GM18951 (cell line): ENCODE measurements at regions of chr6 and their contacts with region 1.

Region 1: DNA sequence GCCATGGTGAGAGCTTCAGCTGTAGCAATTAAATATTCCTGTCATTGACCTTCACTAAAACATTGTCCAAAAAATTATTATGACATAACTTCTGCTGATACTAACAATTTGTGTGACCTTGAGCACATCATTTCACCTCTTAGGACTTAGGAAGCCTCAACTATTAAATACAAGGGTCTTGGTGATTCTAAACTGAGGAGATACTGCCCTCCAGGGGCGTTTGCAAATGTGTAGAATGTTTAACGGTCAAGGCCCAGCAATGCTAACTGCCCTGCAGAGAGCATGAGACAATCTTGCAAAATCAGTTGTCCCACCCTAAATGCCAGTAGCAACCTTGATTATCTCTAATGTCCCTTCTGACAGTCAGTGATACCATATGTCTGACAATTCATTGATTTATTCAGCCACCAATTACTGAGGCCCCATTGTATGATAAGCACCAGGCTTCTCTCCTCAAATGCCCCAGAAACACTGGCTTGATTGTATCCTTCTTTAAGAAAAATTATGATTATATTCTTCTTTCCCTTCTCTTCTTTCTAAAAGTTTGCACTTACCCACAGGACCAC is 284.1 kb upstream of the PLN start:
- POLR2A ChIP-seq: no peak

Region 2: DNA sequence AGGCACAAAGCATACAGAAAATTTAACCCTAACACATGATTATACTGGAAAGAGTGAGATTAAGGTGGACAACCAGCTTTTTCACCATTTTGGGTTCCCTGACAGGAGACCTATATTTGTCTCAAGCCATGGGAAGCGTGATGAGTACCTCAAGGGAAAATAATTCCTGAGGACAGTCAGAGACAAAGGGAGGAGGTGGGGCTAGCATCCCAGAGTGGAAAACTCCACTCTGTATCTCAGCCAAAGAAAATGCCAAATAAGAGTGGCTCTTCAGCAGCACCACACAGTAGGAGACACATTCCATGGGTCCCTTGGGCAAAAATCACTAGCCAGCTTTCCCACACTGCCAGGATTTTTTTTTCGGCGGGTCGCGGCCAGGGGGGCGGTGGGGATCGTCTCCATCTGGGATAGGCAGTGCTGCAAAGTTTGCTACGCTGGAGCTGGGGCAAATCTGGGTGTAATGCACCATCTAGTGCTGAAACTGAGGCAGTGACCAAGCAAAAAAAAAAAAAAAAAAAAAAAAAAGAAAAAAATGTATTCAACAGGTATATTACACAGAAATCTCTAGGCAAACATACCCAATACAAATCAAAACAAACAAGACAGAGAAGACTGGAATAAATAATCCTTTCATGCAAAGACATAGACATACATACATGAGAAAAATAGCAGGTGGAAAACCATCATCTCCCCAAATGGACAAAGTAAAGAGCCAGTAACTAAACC is 434.2 kb before region 1 on chr6:
- in situ Hi-C with region 1: loop called (anchors 25 kb)
- POLR2A ChIP-seq: no peak

Region 3: DNA sequence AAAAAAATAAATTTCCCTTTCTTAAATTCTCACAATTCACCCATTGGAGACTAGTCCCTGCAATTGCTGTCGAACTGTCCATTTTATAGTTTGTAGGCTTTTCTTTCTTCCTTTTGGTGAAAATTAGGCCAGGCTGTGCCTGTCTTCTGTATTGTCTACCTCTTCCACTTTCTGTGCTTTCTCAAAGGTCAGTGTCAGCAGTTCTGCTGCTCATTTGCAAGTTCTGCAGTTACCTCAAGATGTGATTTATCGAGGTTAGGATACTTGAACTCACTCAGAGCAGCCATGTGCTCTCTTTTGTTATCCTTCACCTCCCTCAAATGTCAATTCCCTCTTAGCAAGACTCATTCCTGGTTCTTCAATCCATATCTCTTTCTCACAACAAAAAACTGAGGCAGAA is 177.8 kb before region 1 on chr6:
- in situ Hi-C with region 1: no loop called
- POLR2A ChIP-seq: no peak

Region 4: GRCh38 chr6:118111708-118112107 is 152.3 kb before region 1 on chr6:
- in situ Hi-C with region 1: no loop called
- POLR2A ChIP-seq: no peak

Region 5: DNA sequence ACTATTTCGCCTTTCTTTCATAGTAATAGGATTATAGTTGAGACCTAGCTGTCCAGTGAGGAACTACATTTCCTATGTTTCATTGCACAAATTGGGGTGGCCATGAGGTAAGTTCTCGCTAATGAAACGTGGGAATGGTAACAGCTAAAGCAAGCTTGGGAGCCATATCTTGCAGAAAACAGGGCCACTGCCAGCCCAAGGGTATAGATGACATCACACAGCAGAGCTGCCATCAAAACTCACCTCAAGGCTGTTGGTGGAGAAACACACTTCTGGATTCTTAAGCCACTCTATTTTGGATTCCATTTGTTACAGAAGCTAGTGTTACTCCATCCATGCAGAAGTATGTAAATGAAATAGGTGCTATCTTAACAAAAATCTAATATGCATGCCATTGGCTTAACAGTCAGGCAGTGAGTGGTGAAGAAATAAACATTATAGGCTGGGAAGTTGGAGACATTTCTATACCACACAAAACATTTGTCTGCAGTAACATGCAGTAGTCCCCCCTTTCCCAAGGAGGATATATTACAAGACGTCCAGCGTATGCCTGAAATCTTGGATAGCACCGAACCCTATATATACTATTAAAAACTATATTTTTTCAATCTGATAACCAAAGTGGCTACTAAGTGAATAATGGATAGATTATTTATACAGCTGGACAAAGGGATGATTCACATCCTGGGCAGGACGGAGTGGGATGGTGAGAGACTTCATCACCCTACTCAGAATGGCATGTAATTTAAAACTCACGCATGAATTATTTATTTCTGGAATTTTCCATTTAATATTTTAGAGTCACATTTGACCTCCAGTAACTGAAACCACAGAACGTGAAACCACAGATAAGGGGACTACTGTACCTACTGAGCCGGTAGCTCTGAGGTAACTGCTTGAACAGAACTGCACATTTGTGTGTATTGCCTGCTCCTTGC is 124.0 kb after region 1 on chr6:
- in situ Hi-C with region 1: no loop called
- POLR2A ChIP-seq: no peak

Region 6: DNA sequence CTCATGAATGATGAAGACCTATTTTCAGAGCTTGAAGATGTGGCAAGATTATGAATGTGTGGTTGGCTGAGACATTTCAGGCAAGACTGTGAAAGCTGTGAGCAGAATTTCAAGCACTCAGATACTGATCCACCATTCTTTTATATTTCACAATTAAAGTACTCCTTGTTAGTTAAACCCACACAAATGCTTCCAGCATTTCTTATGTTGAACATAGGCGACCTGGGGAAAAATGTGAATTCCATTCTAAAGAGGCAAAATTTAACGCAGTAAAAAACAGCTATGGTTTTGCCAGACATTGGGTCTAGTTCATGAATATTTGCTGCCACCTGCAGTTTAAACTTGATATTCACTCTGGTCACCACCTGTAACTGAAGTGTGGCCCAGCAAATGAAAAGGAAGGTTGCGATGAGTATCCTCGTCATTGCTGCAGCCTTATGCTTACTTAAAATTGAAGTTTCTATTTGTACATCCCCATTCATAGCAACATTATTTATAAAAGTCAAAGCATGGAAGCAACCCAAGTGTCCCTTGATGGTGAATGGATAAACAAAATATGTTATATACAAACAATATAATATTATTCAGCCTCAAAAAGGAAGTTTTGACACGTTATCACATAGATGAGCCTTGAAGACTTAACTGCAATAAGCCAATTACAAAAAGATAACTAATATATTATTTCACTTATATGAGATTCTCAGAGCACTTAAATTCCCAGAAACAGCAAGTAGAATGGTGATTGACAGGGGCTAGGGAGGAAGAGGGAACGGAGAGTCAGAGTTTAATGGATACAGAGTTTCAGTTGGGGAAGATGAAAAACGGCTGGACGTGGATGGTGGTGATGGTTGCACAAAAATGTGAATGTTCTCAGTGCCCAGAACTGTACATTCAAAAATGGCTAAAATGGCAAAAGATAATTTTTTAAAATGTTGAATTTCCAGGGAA is 846.9 kb after region 1 on chr6:
- in situ Hi-C with region 1: no loop called
- POLR2A ChIP-seq: no peak